GM18951 (cell line): ENCODE measurements at regions of chr2 and their contacts with region 1.

Region 1: GRCh38 chr2:222903234-222904220 is 42.7 kb downstream of the ACSL3 start:
- POLR2A ChIP-seq: no peak

Region 2: DNA sequence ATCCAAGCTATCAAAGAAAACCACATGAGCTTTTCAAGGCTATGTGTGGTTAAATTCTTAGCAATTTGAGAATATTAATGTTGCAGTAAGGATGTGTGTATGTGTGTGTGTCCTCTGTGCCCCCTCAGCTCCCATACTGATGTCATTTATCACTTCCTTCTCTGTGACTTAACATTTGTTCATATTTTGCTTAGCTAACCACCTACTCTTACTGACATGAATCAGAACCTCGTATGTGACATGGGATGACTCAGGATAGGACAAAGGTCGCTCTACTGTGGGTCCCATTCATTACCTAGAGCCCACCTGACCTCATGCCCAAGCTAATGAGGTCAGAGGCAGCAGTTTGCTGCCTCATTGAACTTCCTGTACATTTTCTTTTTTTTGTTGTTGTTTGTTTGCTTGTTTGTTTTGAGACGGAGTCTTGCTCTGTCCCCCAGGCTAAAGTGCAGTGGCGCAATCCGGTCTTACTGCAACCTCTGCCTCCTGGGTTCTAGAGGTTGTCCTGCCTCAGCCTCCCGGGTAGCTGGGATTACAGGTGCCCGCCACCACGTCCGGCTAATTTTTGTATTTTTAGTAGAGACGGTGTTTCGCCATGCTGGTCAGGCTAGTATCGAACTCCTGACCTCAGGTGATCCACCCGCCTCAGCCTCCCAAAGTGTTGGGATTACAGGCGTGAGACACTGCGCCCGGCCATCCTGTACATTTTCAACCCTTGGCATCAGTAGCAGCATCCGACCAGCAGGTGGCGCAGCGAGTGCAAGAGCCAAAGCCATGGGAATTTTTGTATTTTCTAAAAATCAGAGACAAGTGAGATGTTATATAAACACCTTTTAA is 195.6 kb before region 1 on chr2:
- in situ Hi-C with region 1: loop called (anchors 5 kb)
- POLR2A ChIP-seq: no peak